Activated CD4-positive, alpha-beta T cell treated with anti-CD3 and anti-CD28 coated beads for 36 hours (primary cell): ENCODE measurements at regions of chr4 and their contacts with region 1.

Region 1: DNA sequence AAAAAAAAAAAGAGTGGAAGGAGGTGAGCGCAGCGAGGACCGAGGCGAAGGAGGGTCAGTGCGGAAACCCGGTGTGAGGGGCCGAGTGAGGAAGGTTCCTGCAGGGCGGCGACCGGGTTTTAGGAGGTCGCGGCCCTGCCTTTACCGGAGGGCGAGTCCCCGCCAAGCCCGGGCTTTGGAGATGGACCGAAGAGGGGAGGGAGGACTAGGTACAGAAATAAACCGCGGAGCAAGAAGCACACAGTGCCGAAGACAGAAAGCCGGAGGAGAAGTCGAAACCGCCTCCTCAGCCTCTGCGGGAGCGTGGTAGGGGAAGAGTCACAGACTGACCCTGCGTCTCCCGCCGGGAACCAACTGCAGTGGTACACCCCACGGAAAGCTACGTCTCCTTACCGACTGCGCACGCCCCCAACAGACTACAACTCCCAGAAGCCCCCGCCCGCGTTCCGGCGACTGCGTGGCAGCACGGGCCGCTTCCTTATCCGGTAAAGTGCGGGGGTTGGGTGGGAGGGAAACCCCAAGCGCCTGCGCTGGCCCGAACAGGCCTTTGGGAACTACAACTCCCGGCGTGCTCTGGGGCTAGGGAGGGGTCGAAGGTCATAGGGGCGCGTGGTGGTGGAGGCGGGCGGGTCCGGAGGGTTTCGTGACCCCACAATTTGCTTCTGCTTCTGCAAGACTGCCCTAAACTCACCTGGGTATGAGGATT is at the start of gene NFXL1:
- DNase-seq: peak; percentile 98
- ATAC-seq: peak; percentile 97
- H3K4me3 Mint-ChIP-seq: peak within 1 kb of the TSS; percentile 94
- H3K27ac Mint-ChIP-seq: peak within 1 kb of the TSS; percentile 90
- H3K4me1 Mint-ChIP-seq: peaks cover 25% of the 10 kb centered on the region
- H3K27me3 Mint-ChIP-seq: no peaks in the 10 kb centered on the region
- total RNA-seq, gene NFXL1: 12.6 to 14.4 TPM

Region 2: GRCh38 chr4:47463235-47463956 is 451.0 kb before region 1 on chr4 and contains the start of gene COMMD8:
- CTCF ChIA-PET with region 1: no interaction called
- POLR2A ChIA-PET with region 1: no interaction called
- intact Hi-C with region 1: loop called (anchors 1 to 10 kb)
- DNase-seq: peak; percentile 98
- ATAC-seq: peak; percentile 97
- H3K4me3 Mint-ChIP-seq: peak within 1 kb of the TSS; percentile 82
- H3K27ac Mint-ChIP-seq: peak within 1 kb of the TSS; percentile 52
- H3K4me1 Mint-ChIP-seq: peaks cover 31% of the 10 kb centered on the region
- H3K27me3 Mint-ChIP-seq: no peaks in the 10 kb centered on the region
- total RNA-seq, gene COMMD8: 15.0 to 26.5 TPM

Region 3: DNA sequence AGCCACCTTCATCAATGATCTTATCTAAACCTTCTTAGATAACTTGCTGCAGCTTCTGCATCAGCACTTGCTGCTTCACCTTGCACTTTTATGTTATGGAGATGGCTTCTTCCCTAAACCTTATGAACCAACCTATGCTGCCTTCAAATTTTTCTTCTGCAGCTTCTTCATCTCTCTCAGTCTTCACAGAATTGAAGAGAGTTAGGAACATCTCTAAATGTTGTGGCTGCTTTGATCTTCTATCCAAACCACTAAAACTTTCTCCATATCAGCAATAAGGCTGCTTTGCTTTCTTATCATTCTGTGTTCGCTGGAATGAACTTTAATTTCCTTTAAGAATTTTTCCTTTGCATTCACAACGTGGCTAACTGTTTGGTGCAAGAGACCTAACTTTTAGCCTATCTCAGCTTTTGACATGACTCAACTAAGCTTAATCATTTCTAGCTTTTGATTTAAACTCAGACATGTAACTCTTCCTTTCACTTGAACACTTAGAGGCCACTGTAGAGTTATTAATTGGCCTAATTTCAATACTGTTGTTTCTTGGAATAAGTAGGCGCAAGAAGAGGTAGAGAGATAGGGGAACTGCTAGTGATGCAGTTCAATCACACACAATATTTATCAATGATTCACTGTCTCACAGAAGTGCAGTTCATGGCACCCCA is 40.4 kb before region 1 on chr4:
- CTCF ChIA-PET with region 1: no interaction called
- POLR2A ChIA-PET with region 1: no interaction called
- intact Hi-C with region 1: loop called in 1 of 2 experiments (anchors 2 kb)
- DNase-seq: no peak
- ATAC-seq: peak; percentile 96
- H3K4me3 Mint-ChIP-seq: no peak overlapping the region
- H3K27ac Mint-ChIP-seq: peak overlapping the region; percentile 72
- H3K4me1 Mint-ChIP-seq: peaks cover 19% of the 10 kb centered on the region
- H3K27me3 Mint-ChIP-seq: no peaks in the 10 kb centered on the region

Region 4: DNA sequence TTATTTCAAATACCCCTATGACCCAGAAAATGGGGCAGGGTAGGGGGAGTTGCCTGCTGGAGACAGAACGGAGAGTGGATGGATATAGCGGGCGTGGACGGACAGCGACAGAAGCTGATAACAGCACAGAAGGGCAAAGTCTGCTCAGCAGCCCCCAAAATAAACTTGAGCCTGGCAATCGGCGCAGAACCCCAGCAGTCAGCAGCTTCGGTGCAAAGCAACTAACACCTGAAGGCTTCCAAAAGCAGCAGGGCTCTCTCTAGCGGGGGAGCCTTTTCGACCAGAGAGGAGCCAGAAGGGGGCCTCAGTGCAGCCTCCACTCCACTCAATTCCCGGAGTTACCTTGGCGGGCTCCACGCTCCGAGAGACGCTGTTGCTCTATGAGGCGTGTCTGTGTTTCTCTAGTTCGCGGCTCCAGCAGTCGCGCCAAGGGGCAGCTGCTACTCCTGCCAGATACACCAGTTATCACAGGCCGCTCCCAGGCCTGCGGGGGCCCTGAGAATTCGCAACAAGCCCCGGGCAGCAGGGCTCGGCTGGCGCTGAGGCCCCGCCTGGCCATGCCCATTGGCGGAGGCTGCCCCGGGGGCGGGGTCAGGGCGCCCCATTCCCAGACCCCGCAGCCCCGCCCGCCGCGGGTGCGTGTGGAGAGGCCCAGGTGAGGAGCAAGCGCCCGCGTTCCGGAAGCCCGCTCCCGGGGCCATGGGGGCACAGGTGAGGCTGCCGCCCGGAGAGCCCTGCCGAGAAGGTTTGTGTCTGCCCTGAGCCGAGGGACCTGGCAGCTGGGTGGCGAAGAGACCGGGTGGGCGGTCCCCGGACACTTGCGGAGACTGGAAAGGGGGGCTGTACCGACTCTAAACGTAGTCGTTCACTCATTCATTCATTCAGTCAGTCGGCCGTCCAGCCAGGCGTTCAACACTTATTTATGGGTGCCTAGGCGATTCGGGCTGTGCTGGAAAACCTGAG is 102.0 kb after region 1 on chr4 and contains the starts of genes CNGA1 and NIPAL1:
- CTCF ChIA-PET with region 1: interaction called, 4 read pairs
- POLR2A ChIA-PET with region 1: no interaction called
- intact Hi-C with region 1: loop called in 1 of 2 experiments (anchors 1 kb)
- DNase-seq: peak; percentile 80
- ATAC-seq: peak; percentile 86
- H3K4me3 Mint-ChIP-seq: peak within 1 kb of the TSS; percentile 76
- H3K27ac Mint-ChIP-seq: peak within 1 kb of the TSS; percentile 66
- H3K4me1 Mint-ChIP-seq: peaks cover 29% of the 10 kb centered on the region
- H3K27me3 Mint-ChIP-seq: peaks cover 16% of the 10 kb centered on the region
- total RNA-seq, gene CNGA1: 0.16 to 0.30 TPM
- total RNA-seq, gene NIPAL1: 1.6 to 1.8 TPM

Region 5: DNA sequence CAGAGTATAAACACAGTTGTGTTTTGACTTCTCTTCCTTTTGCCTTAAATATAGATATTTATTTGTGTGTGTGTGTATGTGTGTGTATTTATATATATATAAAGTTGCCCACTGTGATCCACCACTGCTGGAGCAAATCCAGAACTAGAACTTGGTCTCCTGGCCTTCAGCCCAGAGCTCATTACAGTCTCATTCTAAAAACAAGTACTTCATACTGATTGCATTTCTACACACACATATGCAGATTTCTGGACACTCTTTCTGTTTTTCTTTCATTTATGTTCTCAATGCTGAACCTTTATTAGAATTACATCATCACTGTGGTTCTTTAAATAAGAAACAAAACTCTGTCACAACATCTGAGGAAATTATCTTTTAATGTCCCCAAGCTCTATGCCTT is 219.3 kb after region 1 on chr4:
- CTCF ChIA-PET with region 1: interaction called, 3 read pairs
- POLR2A ChIA-PET with region 1: no interaction called
- intact Hi-C with region 1: loop called in 1 of 2 experiments (anchors 2 kb)
- DNase-seq: no peak
- ATAC-seq: peak; percentile 10
- H3K4me3 Mint-ChIP-seq: peak overlapping the region; percentile 81
- H3K27ac Mint-ChIP-seq: peak overlapping the region; percentile 97
- H3K4me1 Mint-ChIP-seq: peaks cover 81% of the 10 kb centered on the region
- H3K27me3 Mint-ChIP-seq: no peaks in the 10 kb centered on the region

Region 6: DNA sequence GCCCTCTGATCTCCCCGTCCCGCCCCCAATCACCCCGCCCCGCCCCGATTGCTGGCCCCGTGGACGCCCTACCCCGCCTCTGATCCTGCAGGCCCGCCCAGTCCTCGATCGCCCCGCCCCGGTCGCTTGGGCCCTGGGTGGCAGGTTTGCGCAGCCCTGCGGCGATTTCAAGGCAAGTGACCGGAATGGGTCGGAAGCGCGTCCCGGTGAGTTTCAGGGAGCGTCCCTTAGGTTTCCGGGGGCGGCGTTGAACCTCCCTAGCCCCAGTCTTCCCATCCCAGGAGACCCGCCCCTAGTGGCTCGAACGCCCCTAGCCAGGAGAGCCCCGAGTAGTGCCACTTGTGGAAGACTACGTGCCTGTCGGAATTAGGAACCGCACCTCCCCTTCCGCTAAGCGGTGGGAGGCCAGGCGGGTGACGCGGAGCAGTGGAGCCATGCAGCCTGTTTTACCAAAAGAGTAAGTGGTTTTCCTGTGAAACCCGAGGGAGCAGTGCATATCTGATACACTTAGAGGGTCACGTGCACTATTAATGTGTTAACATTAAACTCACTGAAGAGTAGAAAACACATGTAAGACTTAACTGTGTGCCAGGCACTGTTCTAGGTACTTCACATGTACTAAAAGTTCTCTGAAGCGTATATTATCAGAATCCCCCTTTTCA is 355.6 kb after region 1 on chr4:
- CTCF ChIA-PET with region 1: no interaction called
- POLR2A ChIA-PET with region 1: no interaction called
- intact Hi-C with region 1: loop called in 1 of 2 experiments (anchors 1 kb)
- DNase-seq: peak; percentile 97
- ATAC-seq: peak; percentile 95
- H3K4me3 Mint-ChIP-seq: peak overlapping the region; percentile 89
- H3K27ac Mint-ChIP-seq: peak overlapping the region; percentile 93
- H3K4me1 Mint-ChIP-seq: peaks cover 17% of the 10 kb centered on the region
- H3K27me3 Mint-ChIP-seq: no peaks in the 10 kb centered on the region

Region 7: GRCh38 chr4:48315728-48316630 is 401.6 kb after region 1 on chr4:
- CTCF ChIA-PET with region 1: no interaction called
- POLR2A ChIA-PET with region 1: no interaction called
- intact Hi-C with region 1: no loop called
- DNase-seq: peak; percentile 43
- ATAC-seq: peak; percentile 74
- H3K4me3 Mint-ChIP-seq: no peak overlapping the region
- H3K27ac Mint-ChIP-seq: no peak overlapping the region
- H3K4me1 Mint-ChIP-seq: peaks cover 4% of the 10 kb centered on the region
- H3K27me3 Mint-ChIP-seq: no peaks in the 10 kb centered on the region